K562 (cell line): ENCODE measurements at regions of chr12 and their contacts with region 1.

Region 1: DNA sequence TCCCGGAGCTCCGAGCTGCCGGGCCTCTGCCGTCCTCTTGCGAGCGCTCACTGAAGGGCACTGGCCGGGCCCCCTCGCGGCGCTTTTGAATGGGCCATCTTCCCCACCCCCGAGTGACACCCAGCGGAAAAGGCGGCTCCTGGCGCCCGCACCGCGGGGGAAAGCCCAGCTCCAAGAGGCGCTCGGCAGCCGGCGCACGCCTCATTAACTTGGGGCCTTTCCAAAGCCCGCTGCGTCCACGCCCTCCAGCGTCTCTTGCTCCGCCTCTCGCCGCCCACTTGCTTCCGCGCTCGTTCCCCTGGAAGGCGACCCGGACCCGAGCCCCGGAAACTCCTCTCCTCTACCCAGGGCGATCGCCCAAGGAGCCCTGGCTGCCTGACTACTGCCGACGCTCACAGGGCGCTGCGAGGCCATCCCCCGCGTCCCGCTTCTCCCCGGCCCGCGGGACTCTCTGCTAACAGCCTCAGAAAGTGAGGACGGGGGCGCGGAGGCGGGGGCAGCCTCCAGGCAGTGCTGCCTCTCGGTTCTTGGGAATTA is at the start of gene PHLDA1:
- DNase-seq: peak; percentile 84 to 93 (median 87)
- ATAC-seq: peak; percentile 91
- H3K4me3 ChIP-seq: peak within 1 kb of the TSS; percentile 54
- H3K27ac ChIP-seq: peak within 1 kb of the TSS; percentile 76
- H3K4me1 ChIP-seq: peaks cover 29 to 37% of the 10 kb centered on the region in 2 experiments; a peak in 4 of 5 replicates
- H3K27me3 ChIP-seq: peaks cover 0 to 8% of the 10 kb centered on the region in 2 experiments; a peak in 1 of 5 replicates
- CTCF ChIP-seq: peak; percentile 65 to 98 (median 91)
- EP300 ChIP-seq: no peak
- POLR2A ChIP-seq: peak; percentile 76
- RAD21 ChIP-seq: peak; percentile 94 to 99
- polyA plus RNA-seq, gene PHLDA1: 0.15 to 0.56 TPM

Region 2: DNA sequence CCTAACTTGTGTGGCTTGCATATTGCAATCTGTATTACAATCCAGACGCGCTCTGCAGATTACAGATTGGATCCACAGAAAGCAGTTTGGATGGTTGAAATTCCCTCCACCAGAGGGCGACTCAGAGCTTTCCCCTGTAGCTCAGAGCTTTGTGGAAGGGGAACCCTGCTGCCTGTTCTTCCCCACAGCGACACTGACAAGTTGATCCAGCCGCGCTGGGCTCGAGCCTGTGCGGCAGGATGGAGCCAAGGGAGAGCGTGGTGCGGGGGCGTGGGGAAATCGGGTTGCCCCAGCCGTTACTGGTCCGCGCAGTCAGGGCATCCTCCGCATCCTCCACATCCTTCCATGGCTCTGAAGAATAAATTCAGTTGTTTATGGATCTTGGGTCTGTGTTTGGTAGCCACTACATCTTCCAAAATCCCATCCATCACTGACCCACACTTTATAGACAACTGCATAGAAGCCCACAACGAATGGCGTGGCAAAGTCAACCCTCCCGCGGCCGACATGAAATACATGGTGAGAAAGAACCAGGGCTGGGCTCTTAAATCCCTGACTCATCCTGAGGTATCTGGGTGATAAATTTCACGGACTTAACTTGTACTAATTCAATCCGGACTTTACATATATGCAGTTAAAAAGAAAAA is 697.1 kb before region 1 on chr12 and contains the start of gene GLIPR1L1:
- CTCF ChIA-PET with region 1: no interaction called
- POLR2A ChIA-PET with region 1: no interaction called
- in situ Hi-C with region 1: loop called (anchors 25 kb)
- intact Hi-C with region 1: no loop called
- DNase-seq: peak; percentile 26 to 79 (median 32)
- ATAC-seq: peak; percentile 77
- H3K4me3 ChIP-seq: no peak within 1 kb of the TSS
- H3K27ac ChIP-seq: no peak within 1 kb of the TSS
- H3K4me1 ChIP-seq: peaks cover 0 to 10% of the 10 kb centered on the region in 2 experiments; a peak in 2 of 5 replicates
- H3K27me3 ChIP-seq: no peaks in the 10 kb centered on the region
- CTCF ChIP-seq: peak; percentile 72 to 81 (median 76)
- EP300 ChIP-seq: no peak
- POLR2A ChIP-seq: no peak
- RAD21 ChIP-seq: peak; percentile 47 to 69
- polyA plus RNA-seq, gene GLIPR1L1: not detected

Region 3: GRCh38 chr12:75526655-75527511 is 504.7 kb before region 1 on chr12:
- CTCF ChIA-PET with region 1: interaction called, 14 read pairs
- POLR2A ChIA-PET with region 1: interaction called, 4 read pairs
- in situ Hi-C with region 1: no loop called
- intact Hi-C with region 1: loop called (anchors 1 kb)
- DNase-seq: peak; percentile 19 to 52 (median 25)
- ATAC-seq: peak; percentile 70
- H3K4me3 ChIP-seq: no peak overlapping the region
- H3K27ac ChIP-seq: no peak overlapping the region
- H3K4me1 ChIP-seq: no peaks in the 10 kb centered on the region
- H3K27me3 ChIP-seq: no peaks in the 10 kb centered on the region
- CTCF ChIP-seq: peak; percentile 28 to 70 (median 65); a peak in 5 of 6 replicates
- EP300 ChIP-seq: no peak
- POLR2A ChIP-seq: no peak
- RAD21 ChIP-seq: peak; percentile 89 to 90

Region 4: GRCh38 chr12:75705749-75706711 is 325.6 kb before region 1 on chr12:
- CTCF ChIA-PET with region 1: no interaction called
- POLR2A ChIA-PET with region 1: no interaction called
- in situ Hi-C with region 1: no loop called
- intact Hi-C with region 1: loop called (anchors 5 kb)
- DNase-seq: peak; percentile 32 to 54 (median 38)
- ATAC-seq: peak; percentile 72
- H3K4me3 ChIP-seq: no peak overlapping the region
- H3K27ac ChIP-seq: peak overlapping the region; percentile 65
- H3K4me1 ChIP-seq: peaks cover 3 to 35% of the 10 kb centered on the region in 2 experiments; a peak in 4 of 5 replicates
- H3K27me3 ChIP-seq: no peaks in the 10 kb centered on the region
- CTCF ChIP-seq: no peak
- EP300 ChIP-seq: no peak; the same call in 1 of the 2 replicates
- POLR2A ChIP-seq: no peak
- RAD21 ChIP-seq: no peak

Region 5: GRCh38 chr12:75939016-75939642 is 92.5 kb before region 1 on chr12:
- CTCF ChIA-PET with region 1: no interaction called
- POLR2A ChIA-PET with region 1: interaction called, 7 read pairs
- in situ Hi-C with region 1: no loop called
- intact Hi-C with region 1: loop called (anchors 5 kb)
- DNase-seq: no peak
- ATAC-seq: no peak
- H3K4me3 ChIP-seq: no peak overlapping the region
- H3K27ac ChIP-seq: no peak overlapping the region
- H3K4me1 ChIP-seq: peaks cover 4 to 49% of the 10 kb centered on the region in 2 experiments; a peak in 4 of 5 replicates
- H3K27me3 ChIP-seq: no peaks in the 10 kb centered on the region
- CTCF ChIP-seq: no peak
- EP300 ChIP-seq: no peak
- POLR2A ChIP-seq: no peak
- RAD21 ChIP-seq: no peak

Region 6: GRCh38 chr12:76455582-76456345 is 424.2 kb after region 1 on chr12:
- CTCF ChIA-PET with region 1: no interaction called
- POLR2A ChIA-PET with region 1: no interaction called
- in situ Hi-C with region 1: no loop called
- intact Hi-C with region 1: loop called (anchors 10 kb)
- DNase-seq: peak; percentile 14 to 66 (median 18)
- ATAC-seq: peak; percentile 94
- H3K4me3 ChIP-seq: no peak overlapping the region
- H3K27ac ChIP-seq: no peak overlapping the region
- H3K4me1 ChIP-seq: no peaks in the 10 kb centered on the region
- H3K27me3 ChIP-seq: no peaks in the 10 kb centered on the region
- CTCF ChIP-seq: peak; percentile 34 to 72 (median 51); a peak in 5 of 6 replicates
- EP300 ChIP-seq: no peak
- POLR2A ChIP-seq: 0 out of 2 replicates have a peak, but pooled peaks have one; percentile 27
- RAD21 ChIP-seq: peak; percentile 71 to 88